H1 (cell line): ENCODE measurements at regions of chr3 and their contacts with region 1.

Region 1: DNA sequence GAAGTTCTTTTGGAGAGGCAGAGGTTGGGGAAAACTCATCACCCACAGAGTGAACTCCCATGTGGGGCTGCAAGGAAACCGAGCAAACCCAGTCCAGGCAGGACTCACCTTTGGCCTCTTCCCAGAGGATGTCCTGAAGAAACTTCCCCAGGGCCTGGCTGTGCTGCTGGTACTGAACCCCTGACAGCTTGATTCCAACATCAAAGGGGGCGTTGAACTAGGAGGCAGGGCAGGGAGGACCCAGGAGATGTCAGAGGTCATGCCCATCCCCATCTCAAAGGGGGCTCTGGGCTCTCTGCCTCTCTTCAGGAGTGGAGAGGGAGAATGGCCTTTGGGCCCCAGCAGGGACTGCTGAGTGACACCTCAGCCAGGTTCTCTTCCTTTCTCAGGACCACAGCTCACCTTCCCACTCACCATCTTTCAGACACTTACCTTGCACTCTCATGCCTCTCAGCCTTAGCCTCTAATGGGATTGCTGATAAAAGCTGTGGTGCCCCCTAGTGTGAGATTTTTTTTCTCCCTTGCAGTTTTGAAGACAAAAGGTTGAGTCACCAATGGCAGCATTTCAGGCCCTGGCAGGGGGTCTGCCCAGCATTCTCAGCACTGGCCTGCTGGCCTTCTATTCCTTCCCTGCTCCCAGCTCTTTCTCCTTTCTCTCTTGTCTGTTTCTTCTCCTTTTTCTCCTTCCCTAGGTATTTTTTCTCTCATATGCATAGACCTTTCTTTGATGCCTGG is 6.0 kb downstream of the GHRL start:
- DNase-seq: peak; percentile 57 to 75
- H3K4me3 ChIP-seq: no peak overlapping the region
- H3K27ac ChIP-seq: no peak overlapping the region
- H3K4me1 ChIP-seq: peaks cover 0 to 7% (median 4%) of the 10 kb centered on the region in 4 experiments; a peak in 6 of 7 replicates
- H3K27me3 ChIP-seq: no peaks in the 10 kb centered on the region
- CTCF ChIP-seq: peak in 2 of 3 experiments; percentile 40 to 53; a peak in 3 of 4 replicates
- EP300 ChIP-seq: no peak
- POLR2A ChIP-seq: no peak
- RAD21 ChIP-seq: peak; percentile 60 to 63

Region 2: GRCh38 chr3:10119376-10119775 is 167.4 kb before region 1 on chr3:
- CTCF ChIA-PET with region 1: no interaction called
- POLR2A ChIA-PET with region 1: no interaction called
- DNase-seq: no peak
- H3K4me3 ChIP-seq: no peak overlapping the region
- H3K27ac ChIP-seq: no peak overlapping the region
- H3K4me1 ChIP-seq: peaks cover 0 to 3% (median 0%) of the 10 kb centered on the region in 4 experiments; a peak in 2 of 7 replicates
- H3K27me3 ChIP-seq: no peaks in the 10 kb centered on the region
- CTCF ChIP-seq: no peak
- EP300 ChIP-seq: no peak
- POLR2A ChIP-seq: no peak
- RAD21 ChIP-seq: no peak

Region 3: GRCh38 chr3:10299679-10300078 is 12.9 kb after region 1 on chr3:
- CTCF ChIA-PET with region 1: interaction called, 9 read pairs
- POLR2A ChIA-PET with region 1: interaction called, 11 read pairs
- DNase-seq: no peak
- H3K4me3 ChIP-seq: no peak overlapping the region
- H3K27ac ChIP-seq: no peak overlapping the region
- H3K4me1 ChIP-seq: no peaks in the 10 kb centered on the region
- H3K27me3 ChIP-seq: no peaks in the 10 kb centered on the region
- CTCF ChIP-seq: no peak
- EP300 ChIP-seq: no peak
- POLR2A ChIP-seq: no peak
- RAD21 ChIP-seq: no peak

Region 4: DNA sequence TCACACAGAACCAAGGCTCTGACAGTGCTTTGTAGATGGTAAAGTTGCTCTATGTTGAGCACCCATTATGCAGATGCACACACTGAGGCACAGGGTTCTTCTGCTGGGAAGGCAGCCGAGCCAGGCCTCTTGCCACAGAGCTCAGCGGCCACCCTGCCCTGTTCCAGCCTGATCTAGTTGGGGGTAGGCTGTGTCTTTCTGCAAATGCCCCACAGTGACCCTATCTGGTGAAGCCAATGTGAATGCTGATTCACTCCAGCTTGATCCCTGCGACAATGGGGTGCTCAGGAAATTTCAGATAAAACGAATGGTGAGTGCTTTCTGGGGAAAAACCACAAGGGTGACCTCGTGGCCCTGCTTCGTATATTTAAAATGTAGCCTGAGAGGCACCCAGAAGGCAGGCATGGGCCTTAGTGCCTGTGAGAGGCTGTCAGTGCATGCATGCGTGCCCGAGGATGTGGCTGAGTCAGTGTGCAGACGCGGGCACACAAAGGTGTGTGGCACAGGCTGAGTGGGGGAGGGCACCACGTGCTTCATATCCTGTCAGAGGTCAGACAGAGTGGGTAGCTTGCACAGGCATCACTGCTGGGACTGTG is 133.0 kb after region 1 on chr3:
- CTCF ChIA-PET with region 1: no interaction called
- POLR2A ChIA-PET with region 1: no interaction called
- DNase-seq: no peak
- H3K4me3 ChIP-seq: no peak overlapping the region
- H3K27ac ChIP-seq: no peak overlapping the region
- H3K4me1 ChIP-seq: no peaks in the 10 kb centered on the region
- H3K27me3 ChIP-seq: no peaks in the 10 kb centered on the region
- CTCF ChIP-seq: no peak
- EP300 ChIP-seq: no peak
- POLR2A ChIP-seq: no peak
- RAD21 ChIP-seq: no peak